HAP-1 (cell line): ENCODE measurements at regions of chr9 and their contacts with region 1.

Region 1: GRCh38 chr9:38747067-38747466 is 27.1 kb upstream of the FAM240B start:
- DNase-seq: no peak
- H3K4me3 ChIP-seq: no peak overlapping the region
- H3K4me1 ChIP-seq: no peaks in the 10 kb centered on the region
- H3K27me3 ChIP-seq: no peaks in the 10 kb centered on the region

Region 2: DNA sequence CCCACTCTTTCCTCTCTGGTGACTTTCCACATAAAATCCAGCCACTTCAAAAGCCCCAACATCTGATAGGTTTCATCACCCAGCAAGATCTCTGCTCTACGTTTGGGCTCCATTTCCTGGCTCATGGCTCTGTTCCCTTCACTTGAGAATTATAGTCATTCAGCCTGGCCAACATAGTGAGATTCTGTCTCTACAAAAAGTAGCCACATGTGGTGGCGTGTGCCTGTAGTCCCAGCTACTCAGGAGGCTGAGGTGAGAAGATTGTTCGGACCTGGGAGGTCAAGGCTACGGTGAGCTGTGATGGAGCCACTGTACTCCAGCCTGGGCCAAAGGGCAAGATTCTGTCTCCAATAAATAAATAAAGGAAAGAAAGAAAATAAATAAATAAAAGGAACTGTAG is 239.5 kb before region 1 on chr9:
- in situ Hi-C with region 1: no loop called
- DNase-seq: no peak
- H3K4me3 ChIP-seq: no peak overlapping the region
- H3K4me1 ChIP-seq: no peaks in the 10 kb centered on the region
- H3K27me3 ChIP-seq: no peaks in the 10 kb centered on the region

Region 3: DNA sequence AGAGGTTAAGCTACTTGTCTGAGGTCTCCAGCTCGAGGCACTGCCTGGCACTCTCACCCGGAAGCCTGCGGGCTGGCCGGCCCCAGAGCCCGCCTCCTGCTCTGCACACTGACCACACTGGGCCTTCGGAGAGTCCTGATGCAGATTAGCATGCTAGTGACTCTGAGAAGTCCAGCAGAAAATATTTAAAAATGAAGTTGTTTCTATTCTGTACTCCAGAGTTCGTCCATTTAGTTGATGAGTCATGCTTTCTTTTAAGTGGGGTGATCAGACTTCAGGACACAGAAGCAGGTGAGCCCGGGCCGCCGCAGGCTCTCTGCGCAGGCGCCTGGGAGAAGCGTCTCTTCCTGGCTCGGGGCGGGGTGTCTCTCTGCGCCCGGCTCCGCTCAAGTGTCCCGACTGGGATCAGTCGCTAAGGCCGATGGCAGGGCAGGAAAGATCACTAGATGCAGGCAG is 59.7 kb before region 1 on chr9:
- in situ Hi-C with region 1: loop called (anchors 5 kb)
- DNase-seq: no peak
- H3K4me3 ChIP-seq: no peak overlapping the region
- H3K4me1 ChIP-seq: peaks cover 49% of the 10 kb centered on the region
- H3K27me3 ChIP-seq: no peaks in the 10 kb centered on the region

Region 4: GRCh38 chr9:38713426-38713825 is 33.6 kb before region 1 on chr9:
- in situ Hi-C with region 1: loop called (anchors 5 kb)
- DNase-seq: no peak
- H3K4me3 ChIP-seq: no peak overlapping the region
- H3K4me1 ChIP-seq: no peaks in the 10 kb centered on the region
- H3K27me3 ChIP-seq: no peaks in the 10 kb centered on the region